OCI-LY7 (cell line): ENCODE measurements at regions of chr21 and their contacts with region 1.

Region 1: GRCh38 chr21:14554948-14555347 is 8.8 kb upstream of the SAMSN1 start:
- DNase-seq: no peak
- H3K4me3 ChIP-seq: no peak overlapping the region
- H3K27ac ChIP-seq: no peak overlapping the region
- H3K4me1 ChIP-seq: no peaks in the 10 kb centered on the region
- CTCF ChIP-seq: no peak

Region 2: GRCh38 chr21:14566894-14567293 is 11.9 kb after region 1 on chr21:
- CTCF ChIA-PET with region 1: no interaction called
- POLR2A ChIA-PET with region 1: interaction called, 13 read pairs
- intact Hi-C with region 1: no loop called
- DNase-seq: no peak
- H3K4me3 ChIP-seq: no peak overlapping the region
- H3K27ac ChIP-seq: no peak overlapping the region
- H3K4me1 ChIP-seq: no peaks in the 10 kb centered on the region
- CTCF ChIP-seq: no peak